GM12878 (cell line): ENCODE measurements at regions of chr3 and their contacts with region 1.

Region 1: DNA sequence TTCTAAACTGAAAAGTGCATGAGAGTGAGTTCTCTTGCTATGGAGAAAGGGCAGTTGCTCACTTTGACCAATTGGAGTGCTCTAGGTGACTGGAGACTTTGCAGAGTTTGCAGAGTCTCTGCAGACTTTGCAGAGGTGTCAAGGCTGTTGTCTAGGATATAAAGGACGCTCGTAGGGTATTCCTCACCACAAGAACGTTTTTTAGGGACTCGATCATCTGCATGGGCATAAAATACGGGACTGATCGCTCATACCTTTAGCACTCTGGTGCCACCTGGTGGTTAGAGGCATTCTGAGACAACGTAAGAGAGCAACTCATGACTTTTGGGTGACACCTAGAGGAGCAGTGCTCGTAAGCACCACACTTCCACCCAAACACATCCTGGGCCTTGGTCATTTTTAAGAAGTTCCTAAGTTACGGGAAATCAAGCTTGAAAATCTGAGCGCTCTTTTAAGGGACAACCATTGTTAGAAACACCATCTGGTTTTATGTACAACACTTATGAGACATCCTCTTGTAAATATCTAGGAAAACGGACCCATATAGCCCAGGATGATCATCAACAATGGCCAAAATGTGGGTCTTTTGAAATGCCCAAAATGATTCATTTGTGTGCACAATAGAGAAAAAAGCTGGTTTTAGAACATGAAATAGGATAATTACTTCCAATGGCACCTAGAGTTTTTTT is 51.6 kb upstream of the XCR1 start:
- DNase-seq: peak; percentile 82
- ATAC-seq: peak; percentile 99
- H3K4me3 ChIP-seq: no peak overlapping the region
- H3K27ac ChIP-seq: no peak overlapping the region
- H3K4me1 ChIP-seq: no peaks in the 10 kb centered on the region
- H3K27me3 ChIP-seq: 0 out of 4 replicates have a peak, but pooled peaks cover 0 to 2% of the 10 kb centered on the region in 2 experiments
- CTCF ChIP-seq: peak; percentile 93 to 100 (median 100); a peak in 5 of 6 replicates
- EP300 ChIP-seq: no peak
- POLR2A ChIP-seq: no peak
- RAD21 ChIP-seq: peak; percentile 100

Region 2: GRCh38 chr3:44136421-44136820 is 1942.4 kb before region 1 on chr3:
- CTCF ChIA-PET with region 1: no interaction called
- POLR2A ChIA-PET with region 1: no interaction called
- RAD21 ChIA-PET with region 1: no interaction called
- SMC1A ChIA-PET with region 1: no interaction called
- in situ Hi-C with region 1: no loop called
- intact Hi-C with region 1: no loop called
- DNase-seq: no peak
- ATAC-seq: no peak
- H3K4me3 ChIP-seq: no peak overlapping the region
- H3K27ac ChIP-seq: no peak overlapping the region
- H3K4me1 ChIP-seq: no peaks in the 10 kb centered on the region; the same call in 1 of the 2 replicates
- H3K27me3 ChIP-seq: peaks cover 0 to 2% of the 10 kb centered on the region in 2 experiments; a peak in 1 of 4 replicates
- CTCF ChIP-seq: no peak
- EP300 ChIP-seq: no peak
- POLR2A ChIP-seq: no peak
- RAD21 ChIP-seq: no peak

Region 3: DNA sequence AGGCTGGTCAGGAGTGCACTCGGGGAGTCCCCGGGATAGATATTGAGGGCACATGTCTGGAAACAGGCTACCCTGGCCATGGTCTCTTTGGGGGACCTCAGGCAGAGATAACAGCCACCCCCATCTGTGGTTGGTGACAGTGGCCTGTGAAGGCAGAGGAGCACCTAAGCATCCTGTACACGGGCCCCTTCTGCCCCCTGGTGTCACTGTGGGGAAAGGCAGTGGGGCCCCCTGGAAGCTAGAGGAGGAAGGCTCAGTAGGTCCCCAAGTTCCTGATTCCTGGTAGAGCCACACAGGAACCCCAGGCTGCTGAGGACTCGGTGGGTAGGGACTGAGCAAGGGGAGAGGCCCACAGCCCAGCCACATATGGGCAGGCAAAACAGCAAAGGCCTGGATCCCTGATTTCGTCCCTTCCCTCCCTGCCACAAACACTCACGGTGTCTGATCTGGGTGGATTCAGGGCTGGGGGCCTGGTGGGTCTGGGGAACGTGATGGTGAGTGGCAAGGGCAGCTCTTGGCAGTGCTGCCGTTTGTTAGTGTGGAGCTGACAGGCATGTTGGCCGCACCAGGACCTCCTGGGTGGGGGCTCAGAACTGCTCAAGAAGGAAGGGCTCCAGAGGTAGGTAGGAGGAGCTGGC is 149.7 kb before region 1 on chr3:
- CTCF ChIA-PET with region 1: interaction called, 126 read pairs
- POLR2A ChIA-PET with region 1: no interaction called
- RAD21 ChIA-PET with region 1: interaction called, 33 read pairs
- SMC1A ChIA-PET with region 1: interaction called, 523 read pairs
- in situ Hi-C with region 1: no loop called
- intact Hi-C with region 1: no loop called
- DNase-seq: no peak
- ATAC-seq: peak; percentile 100
- H3K4me3 ChIP-seq: no peak overlapping the region
- H3K27ac ChIP-seq: no peak overlapping the region
- H3K4me1 ChIP-seq: no peaks in the 10 kb centered on the region; the same call in 1 of the 2 replicates
- H3K27me3 ChIP-seq: no peaks in the 10 kb centered on the region
- CTCF ChIP-seq: peak; percentile 94 to 98 (median 97); a peak in 5 of 6 replicates
- EP300 ChIP-seq: no peak
- POLR2A ChIP-seq: no peak
- RAD21 ChIP-seq: peak; percentile 99

Region 4: GRCh38 chr3:45964139-45964538 is 114.7 kb before region 1 on chr3:
- CTCF ChIA-PET with region 1: interaction called, 90 read pairs
- POLR2A ChIA-PET with region 1: interaction called, 3 read pairs
- RAD21 ChIA-PET with region 1: interaction called, 20 read pairs
- SMC1A ChIA-PET with region 1: interaction called, 25 read pairs
- in situ Hi-C with region 1: no loop called
- intact Hi-C with region 1: no loop called
- DNase-seq: peak; percentile 31
- ATAC-seq: peak; percentile 75
- H3K4me3 ChIP-seq: no peak overlapping the region
- H3K27ac ChIP-seq: no peak overlapping the region
- H3K4me1 ChIP-seq: peaks cover 48% of the 10 kb centered on the region
- H3K27me3 ChIP-seq: no peaks in the 10 kb centered on the region
- CTCF ChIP-seq: no peak
- EP300 ChIP-seq: peak in 1 of 2 experiments; percentile 26; a peak in 1 of 4 replicates
- POLR2A ChIP-seq: no peak
- RAD21 ChIP-seq: no peak

Region 5: GRCh38 chr3:46006238-46007032 is 72.4 kb before region 1 on chr3:
- CTCF ChIA-PET with region 1: interaction called, 10 read pairs
- POLR2A ChIA-PET with region 1: no interaction called
- RAD21 ChIA-PET with region 1: interaction called, 5 read pairs
- SMC1A ChIA-PET with region 1: interaction called, 3 read pairs
- in situ Hi-C with region 1: no loop called
- intact Hi-C with region 1: no loop called
- DNase-seq: no peak
- ATAC-seq: no peak
- H3K4me3 ChIP-seq: no peak overlapping the region
- H3K27ac ChIP-seq: no peak overlapping the region
- H3K4me1 ChIP-seq: peaks cover 3% of the 10 kb centered on the region
- H3K27me3 ChIP-seq: no peaks in the 10 kb centered on the region
- CTCF ChIP-seq: no peak
- EP300 ChIP-seq: no peak
- POLR2A ChIP-seq: no peak
- RAD21 ChIP-seq: no peak

Region 6: DNA sequence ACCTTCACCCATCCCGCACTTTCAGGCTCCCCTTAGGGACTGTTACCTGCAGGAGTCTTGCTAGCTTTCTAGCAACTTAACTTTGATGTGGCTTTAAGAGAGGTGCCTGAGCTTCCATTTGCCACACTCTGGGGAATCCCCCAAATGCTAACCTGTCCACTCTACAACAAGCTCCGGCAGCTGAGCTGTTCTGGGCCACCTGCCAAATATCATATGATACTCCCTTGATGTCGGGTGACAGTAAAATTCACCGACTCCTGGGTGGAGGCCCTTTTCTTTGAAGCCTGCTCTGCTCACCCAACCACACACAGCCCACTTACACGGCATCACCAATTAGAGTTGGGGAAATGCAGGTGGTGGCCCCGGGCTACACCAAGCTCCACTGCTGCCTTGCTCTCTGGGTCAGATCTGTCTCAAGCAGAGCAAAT is 13.5 kb before region 1 on chr3:
- CTCF ChIA-PET with region 1: interaction called, 110 read pairs
- POLR2A ChIA-PET with region 1: interaction called, 6 read pairs
- RAD21 ChIA-PET with region 1: interaction called, 67 read pairs
- SMC1A ChIA-PET with region 1: interaction called, 59 read pairs
- in situ Hi-C with region 1: no loop called
- intact Hi-C with region 1: no loop called
- DNase-seq: peak; percentile 56
- ATAC-seq: peak; percentile 96
- H3K4me3 ChIP-seq: no peak overlapping the region
- H3K27ac ChIP-seq: no peak overlapping the region
- H3K4me1 ChIP-seq: peaks cover 19% of the 10 kb centered on the region
- H3K27me3 ChIP-seq: no peaks in the 10 kb centered on the region
- CTCF ChIP-seq: no peak
- EP300 ChIP-seq: peak in 1 of 2 experiments; percentile 59; a peak in 2 of 4 replicates
- POLR2A ChIP-seq: no peak
- RAD21 ChIP-seq: peak; percentile 0; the same call in 1 of the 2 replicates

Region 7: DNA sequence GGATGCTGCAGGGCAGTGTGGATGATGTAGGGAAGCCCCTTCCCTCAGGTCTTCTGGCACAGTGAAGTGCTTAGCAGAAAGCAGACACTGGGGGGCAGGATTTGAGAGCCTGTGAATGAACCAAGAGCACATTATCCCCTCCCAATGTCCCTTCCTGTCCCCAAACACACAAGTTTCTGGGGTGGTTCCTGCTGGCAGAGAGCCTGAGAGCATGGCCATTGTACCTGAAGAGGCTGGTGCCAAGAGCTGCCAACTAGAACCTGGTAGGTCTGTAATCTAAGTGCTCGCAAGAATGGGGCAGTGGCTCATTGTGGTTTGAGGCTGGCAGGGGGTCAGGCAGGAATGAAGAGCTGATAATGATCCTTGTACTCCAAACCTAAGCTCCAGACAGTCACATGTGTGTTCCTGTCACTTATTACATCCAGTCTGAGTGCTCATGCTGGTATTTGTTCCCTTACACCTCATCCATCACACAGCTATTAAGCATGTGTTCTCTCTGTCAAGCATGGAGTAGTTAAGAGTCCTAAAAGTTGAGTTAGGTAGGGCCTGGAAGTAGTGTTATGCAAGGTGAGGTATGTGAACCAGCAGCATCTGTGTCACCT is 136.0 kb after region 1 on chr3:
- CTCF ChIA-PET with region 1: interaction called, 396 read pairs
- POLR2A ChIA-PET with region 1: no interaction called
- RAD21 ChIA-PET with region 1: interaction called, 73 read pairs
- SMC1A ChIA-PET with region 1: interaction called, 342 read pairs
- in situ Hi-C with region 1: no loop called
- intact Hi-C with region 1: no loop called
- DNase-seq: no peak
- ATAC-seq: peak; percentile 85
- H3K4me3 ChIP-seq: no peak overlapping the region
- H3K27ac ChIP-seq: no peak overlapping the region
- H3K4me1 ChIP-seq: peaks cover 31% of the 10 kb centered on the region
- H3K27me3 ChIP-seq: peaks cover 0 to 5% of the 10 kb centered on the region in 2 experiments; a peak in 1 of 4 replicates
- CTCF ChIP-seq: peak; percentile 44 to 64 (median 61); a peak in 5 of 6 replicates
- EP300 ChIP-seq: no peak
- POLR2A ChIP-seq: no peak
- RAD21 ChIP-seq: peak; percentile 69

Region 8: DNA sequence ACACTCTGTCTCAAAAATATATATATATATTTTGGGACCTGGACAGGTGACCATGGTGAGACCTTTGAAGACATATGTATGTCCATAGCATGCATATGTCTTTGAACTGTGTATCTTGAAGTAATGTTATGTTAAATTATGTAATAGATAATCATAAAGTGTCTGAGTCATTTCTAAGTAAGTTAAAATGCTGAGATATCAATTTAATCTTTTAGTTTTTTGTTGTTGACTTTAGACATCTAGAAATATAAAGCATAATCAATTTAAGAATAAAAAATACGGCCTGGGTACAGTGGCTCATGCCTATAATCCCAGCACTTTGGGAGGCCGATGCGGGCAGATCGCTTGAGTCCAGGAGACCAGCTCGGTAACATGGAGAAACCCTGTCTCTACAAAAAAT is 1097.7 kb after region 1 on chr3:
- CTCF ChIA-PET with region 1: no interaction called
- POLR2A ChIA-PET with region 1: no interaction called
- RAD21 ChIA-PET with region 1: no interaction called
- SMC1A ChIA-PET with region 1: no interaction called
- in situ Hi-C with region 1: no loop called
- intact Hi-C with region 1: no loop called
- DNase-seq: no peak
- ATAC-seq: no peak
- H3K4me3 ChIP-seq: no peak overlapping the region
- H3K27ac ChIP-seq: peak overlapping the region; percentile 91
- H3K4me1 ChIP-seq: peaks cover 23% of the 10 kb centered on the region
- H3K27me3 ChIP-seq: no peaks in the 10 kb centered on the region
- CTCF ChIP-seq: no peak
- EP300 ChIP-seq: no peak
- POLR2A ChIP-seq: no peak
- RAD21 ChIP-seq: no peak